CD8-positive, alpha-beta T cell (primary cell): ENCODE measurements at regions of chr13 and their contacts with region 1.

Region 1: DNA sequence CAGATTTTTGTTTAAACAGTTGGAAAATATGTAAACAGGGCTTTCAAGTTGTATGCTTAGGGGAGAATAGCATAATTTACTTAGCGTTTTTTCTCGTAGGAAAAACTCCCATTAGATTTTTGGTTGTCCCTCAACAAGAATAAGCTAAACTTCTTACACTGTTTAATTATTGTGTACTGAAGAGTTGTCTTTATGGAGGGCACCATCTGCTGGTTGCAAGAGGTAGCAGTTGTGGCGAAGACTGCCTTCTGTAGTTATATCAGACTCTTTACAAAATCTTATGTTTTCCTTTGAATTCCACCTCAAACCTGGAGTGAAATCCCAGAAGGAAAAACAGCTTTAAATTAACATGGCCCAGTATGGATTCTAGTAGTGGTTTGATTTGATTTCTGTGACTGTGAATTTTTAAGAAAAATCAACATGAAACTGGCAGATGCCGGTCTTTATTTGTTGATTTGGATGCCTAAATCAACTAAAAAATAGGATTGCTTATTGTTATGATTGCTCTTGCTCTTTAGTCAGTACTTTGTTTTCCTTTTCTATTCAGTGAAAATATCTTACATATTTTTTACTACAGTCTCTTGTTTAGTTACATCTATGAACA is 53.4 kb downstream of the PDS5B start:
- DNase-seq: peak; percentile 10 to 81 (median 56)
- ATAC-seq: peak; percentile 92
- H3K4me3 ChIP-seq: no peak overlapping the region
- H3K4me3 Mint-ChIP-seq: no peak overlapping the region
- H3K27ac ChIP-seq: no peak overlapping the region
- H3K27ac Mint-ChIP-seq: no peak overlapping the region
- H3K4me1 ChIP-seq: no peaks in the 10 kb centered on the region
- H3K4me1 Mint-ChIP-seq: peaks cover 32% of the 10 kb centered on the region
- H3K27me3 ChIP-seq: no peaks in the 10 kb centered on the region
- H3K27me3 Mint-ChIP-seq: no peaks in the 10 kb centered on the region
- CTCF ChIP-seq: peak; percentile 73

Region 2: GRCh38 chr13:32310134-32310706 is 329.4 kb before region 1 on chr13:
- CTCF ChIA-PET with region 1: no interaction called
- POLR2A ChIA-PET with region 1: no interaction called
- intact Hi-C with region 1: loop called in 1 of 2 experiments (anchors 2 kb)
- DNase-seq: peak in 4 of 9 experiments; percentile 16 to 67 (median 36)
- ATAC-seq: peak; percentile 43
- H3K4me3 ChIP-seq: no peak overlapping the region
- H3K4me3 Mint-ChIP-seq: peak overlapping the region; percentile 33
- H3K27ac ChIP-seq: no peak overlapping the region
- H3K27ac Mint-ChIP-seq: no peak overlapping the region
- H3K4me1 ChIP-seq: peaks cover 8% of the 10 kb centered on the region
- H3K4me1 Mint-ChIP-seq: peaks cover 17% of the 10 kb centered on the region
- H3K27me3 ChIP-seq: no peaks in the 10 kb centered on the region
- H3K27me3 Mint-ChIP-seq: no peaks in the 10 kb centered on the region
- CTCF ChIP-seq: peak; percentile 65

Region 3: GRCh38 chr13:32381539-32381938 is 258.1 kb before region 1 on chr13:
- CTCF ChIA-PET with region 1: interaction called, 4 read pairs
- POLR2A ChIA-PET with region 1: no interaction called
- intact Hi-C with region 1: loop called (anchors 2 kb)
- DNase-seq: peak in 5 of 9 experiments; percentile 17 to 70 (median 30)
- ATAC-seq: peak; percentile 80
- H3K4me3 ChIP-seq: no peak overlapping the region
- H3K4me3 Mint-ChIP-seq: no peak overlapping the region
- H3K27ac ChIP-seq: no peak overlapping the region
- H3K27ac Mint-ChIP-seq: no peak overlapping the region
- H3K4me1 ChIP-seq: no peaks in the 10 kb centered on the region
- H3K4me1 Mint-ChIP-seq: no peaks in the 10 kb centered on the region
- H3K27me3 ChIP-seq: no peaks in the 10 kb centered on the region
- H3K27me3 Mint-ChIP-seq: no peaks in the 10 kb centered on the region
- CTCF ChIP-seq: peak; percentile 51

Region 4: GRCh38 chr13:32499538-32500210 is 139.9 kb before region 1 on chr13:
- CTCF ChIA-PET with region 1: no interaction called
- POLR2A ChIA-PET with region 1: no interaction called
- intact Hi-C with region 1: no loop called
- DNase-seq: no peak
- ATAC-seq: no peak
- H3K4me3 ChIP-seq: no peak overlapping the region
- H3K4me3 Mint-ChIP-seq: no peak overlapping the region
- H3K27ac ChIP-seq: no peak overlapping the region
- H3K27ac Mint-ChIP-seq: peak overlapping the region; percentile 7
- H3K4me1 ChIP-seq: peaks cover 3% of the 10 kb centered on the region
- H3K4me1 Mint-ChIP-seq: peaks cover 11% of the 10 kb centered on the region
- H3K27me3 ChIP-seq: no peaks in the 10 kb centered on the region
- H3K27me3 Mint-ChIP-seq: no peaks in the 10 kb centered on the region
- CTCF ChIP-seq: no peak

Region 5: GRCh38 chr13:32594157-32594738 is 45.4 kb before region 1 on chr13:
- CTCF ChIA-PET with region 1: interaction called, 31 read pairs
- POLR2A ChIA-PET with region 1: no interaction called
- intact Hi-C with region 1: no loop called
- DNase-seq: no peak
- ATAC-seq: no peak
- H3K4me3 ChIP-seq: no peak overlapping the region
- H3K4me3 Mint-ChIP-seq: no peak overlapping the region
- H3K27ac ChIP-seq: no peak overlapping the region
- H3K27ac Mint-ChIP-seq: no peak overlapping the region
- H3K4me1 ChIP-seq: peaks cover 19% of the 10 kb centered on the region
- H3K4me1 Mint-ChIP-seq: peaks cover 61% of the 10 kb centered on the region
- H3K27me3 ChIP-seq: no peaks in the 10 kb centered on the region
- H3K27me3 Mint-ChIP-seq: no peaks in the 10 kb centered on the region
- CTCF ChIP-seq: no peak

Region 6: GRCh38 chr13:32650705-32651311 is 11.2 kb after region 1 on chr13:
- CTCF ChIA-PET with region 1: interaction called, 17 read pairs
- POLR2A ChIA-PET with region 1: no interaction called
- intact Hi-C with region 1: no loop called
- DNase-seq: peak in 8 of 9 experiments; percentile 12 to 80 (median 56)
- ATAC-seq: peak; percentile 84
- H3K4me3 ChIP-seq: no peak overlapping the region
- H3K4me3 Mint-ChIP-seq: no peak overlapping the region
- H3K27ac ChIP-seq: no peak overlapping the region
- H3K27ac Mint-ChIP-seq: no peak overlapping the region
- H3K4me1 ChIP-seq: peaks cover 3% of the 10 kb centered on the region
- H3K4me1 Mint-ChIP-seq: peaks cover 37% of the 10 kb centered on the region
- H3K27me3 ChIP-seq: no peaks in the 10 kb centered on the region
- H3K27me3 Mint-ChIP-seq: no peaks in the 10 kb centered on the region
- CTCF ChIP-seq: peak; percentile 73

Region 7: GRCh38 chr13:32669030-32669646 is 29.5 kb after region 1 on chr13:
- CTCF ChIA-PET with region 1: interaction called, 4 read pairs
- POLR2A ChIA-PET with region 1: no interaction called
- intact Hi-C with region 1: loop called in 1 of 2 experiments (anchors 1 kb)
- DNase-seq: peak in 3 of 9 experiments; percentile 7 to 70 (median 59)
- ATAC-seq: peak; percentile 76
- H3K4me3 ChIP-seq: no peak overlapping the region
- H3K4me3 Mint-ChIP-seq: no peak overlapping the region
- H3K27ac ChIP-seq: no peak overlapping the region
- H3K27ac Mint-ChIP-seq: no peak overlapping the region
- H3K4me1 ChIP-seq: no peaks in the 10 kb centered on the region
- H3K4me1 Mint-ChIP-seq: peaks cover 14% of the 10 kb centered on the region
- H3K27me3 ChIP-seq: no peaks in the 10 kb centered on the region
- H3K27me3 Mint-ChIP-seq: no peaks in the 10 kb centered on the region
- CTCF ChIP-seq: peak; percentile 60

Region 8: GRCh38 chr13:32988608-32989289 is 349.1 kb after region 1 on chr13:
- CTCF ChIA-PET with region 1: no interaction called
- POLR2A ChIA-PET with region 1: no interaction called
- intact Hi-C with region 1: no loop called
- DNase-seq: no peak
- ATAC-seq: no peak
- H3K4me3 ChIP-seq: no peak overlapping the region
- H3K4me3 Mint-ChIP-seq: no peak overlapping the region
- H3K27ac ChIP-seq: no peak overlapping the region
- H3K27ac Mint-ChIP-seq: no peak overlapping the region
- H3K4me1 ChIP-seq: no peaks in the 10 kb centered on the region
- H3K4me1 Mint-ChIP-seq: peaks cover 6% of the 10 kb centered on the region
- H3K27me3 ChIP-seq: peaks cover 0 to 4% of the 10 kb centered on the region in 2 experiments
- H3K27me3 Mint-ChIP-seq: peaks cover 18% of the 10 kb centered on the region
- CTCF ChIP-seq: no peak